ENCODE measurements at regions of chr3 and their contacts with region 1.

Region 1: GRCh38 chr3:101170062-101170771 is 150.2 kb downstream of the IMPG2 start:
- DNase-seq: peak; percentile 66
- H3K4me3 ChIP-seq: peak overlapping the region in 2 of 4 donors; percentile 0 to 16
- H3K27ac ChIP-seq: peak overlapping the region; percentile 55 to 82 (median 74)
- H3K4me1 ChIP-seq: peaks cover 0 to 33% (median 25%) of the 10 kb centered on the region in 4 donors
- H3K27me3 ChIP-seq: no peaks in the 10 kb centered on the region
- CTCF ChIP-seq: no peak
- EP300 ChIP-seq: peak in 3 of 4 donors; percentile 6 to 66 (median 50)
- POLR2A ChIP-seq: no peak

Region 2: GRCh38 chr3:100536088-100536487 is 634.1 kb before region 1 on chr3:
- intact Hi-C with region 1: no loop called
- DNase-seq: no peak
- H3K4me3 ChIP-seq: no peak overlapping the region
- H3K27ac ChIP-seq: no peak overlapping the region
- H3K4me1 ChIP-seq: no peaks in the 10 kb centered on the region
- H3K27me3 ChIP-seq: no peaks in the 10 kb centered on the region
- CTCF ChIP-seq: no peak
- EP300 ChIP-seq: no peak
- POLR2A ChIP-seq: no peak

Region 3: GRCh38 chr3:100978011-100978659 is 192.1 kb before region 1 on chr3:
- intact Hi-C with region 1: loop called (anchors 1 kb)
- DNase-seq: peak; percentile 72
- H3K4me3 ChIP-seq: no peak overlapping the region
- H3K27ac ChIP-seq: peak overlapping the region; percentile 58 to 70 (median 67)
- H3K4me1 ChIP-seq: peaks cover 0 to 54% (median 46%) of the 10 kb centered on the region in 4 donors
- H3K27me3 ChIP-seq: no peaks in the 10 kb centered on the region
- CTCF ChIP-seq: no peak
- EP300 ChIP-seq: no peak
- POLR2A ChIP-seq: no peak